SK-MEL-5 (cell line): ENCODE measurements at regions of chr1 and their contacts with region 1.

Region 1: DNA sequence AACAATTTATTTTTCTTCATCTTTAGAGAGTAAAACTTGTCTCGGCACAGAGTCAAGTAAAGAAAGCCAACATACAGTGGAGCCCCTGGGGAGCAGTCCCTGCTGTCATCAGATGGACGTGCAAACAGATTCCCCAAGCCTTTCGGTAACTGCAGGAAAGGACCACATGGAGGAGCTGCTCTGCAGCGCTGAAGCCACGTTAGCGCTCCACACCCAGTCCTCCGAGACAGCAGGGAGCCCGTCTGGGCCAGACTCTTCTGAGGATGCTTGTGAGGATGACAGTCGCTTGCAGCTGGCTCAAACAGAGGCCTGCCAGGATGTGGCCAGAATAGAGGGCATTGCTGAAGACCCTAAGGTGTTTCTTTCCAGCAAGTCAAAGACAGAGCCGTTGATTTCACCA is 77.1 kb upstream of the SCCPDH start:
- DNase-seq: peak; percentile 64

Region 2: DNA sequence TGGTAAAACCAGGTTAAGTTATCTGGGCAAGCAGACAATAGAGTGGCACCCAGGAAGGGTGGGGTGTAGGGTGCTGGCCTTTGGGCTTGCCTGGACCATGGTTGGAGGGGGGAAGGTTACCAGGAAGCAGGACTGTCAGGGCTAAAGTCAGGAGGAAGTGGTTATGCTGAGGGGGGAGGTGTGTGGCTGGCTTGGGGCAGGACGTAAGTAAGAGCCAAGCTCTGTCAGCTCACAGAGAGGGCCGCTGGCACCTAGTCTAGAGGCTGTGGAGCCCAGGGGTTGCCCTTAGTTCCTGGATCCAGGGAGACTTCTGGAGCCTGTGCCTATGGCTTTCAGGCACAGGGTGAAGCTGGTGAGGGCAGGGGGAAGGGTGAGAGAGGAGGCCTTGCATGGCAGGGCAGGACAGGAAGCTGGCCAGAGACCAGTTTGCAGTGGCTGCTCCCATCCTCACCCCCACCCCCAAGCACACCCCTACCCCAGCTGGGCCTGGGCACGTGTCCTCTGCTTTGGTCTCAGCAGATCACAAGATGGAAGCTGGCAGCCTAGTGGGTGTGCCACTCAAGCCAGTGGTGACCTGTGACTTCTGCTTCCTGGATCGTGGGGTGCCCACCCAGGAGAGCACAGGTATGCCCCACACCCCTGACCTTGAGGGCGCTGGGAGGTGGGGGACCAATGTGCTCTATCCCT is 119.6 kb before region 1 on chr1:
- in situ Hi-C with region 1: loop called (anchors 25 kb)
- DNase-seq: no peak

Region 3: GRCh38 chr1:246689409-246690008 is 42.4 kb after region 1 on chr1:
- in situ Hi-C with region 1: loop called (anchors 5 kb)
- DNase-seq: peak; percentile 85